HCT116 (cell line): ENCODE measurements at regions of chr11 and their contacts with region 1.

Region 1: GRCh38 chr11:96342961-96343711 is at the start of gene MAML2:
- DNase-seq: peak; percentile 79
- ATAC-seq: peak; percentile 99
- H3K4me3 ChIP-seq: peak within 1 kb of the TSS; percentile 59 to 69
- H3K27ac ChIP-seq: no peak within 1 kb of the TSS
- H3K4me1 ChIP-seq: peaks cover 4 to 20% of the 10 kb centered on the region in 2 experiments; a peak in 3 of 4 replicates
- H3K27me3 ChIP-seq: no peaks in the 10 kb centered on the region
- CTCF ChIP-seq: peak; percentile 62 to 94 (median 82)
- POLR2A ChIP-seq: no peak
- RAD21 ChIP-seq: peak; percentile 88
- total RNA-seq, gene MAML2: 2.6 TPM

Region 2: GRCh38 chr11:95849087-95849825 is 493.9 kb before region 1 on chr11:
- CTCF ChIA-PET with region 1: interaction called, 12 read pairs
- POLR2A ChIA-PET with region 1: interaction called, 3 read pairs
- RAD21 ChIA-PET with region 1: interaction called in 1 of 2 experiments, 4 read pairs
- intact Hi-C with region 1: no loop called
- DNase-seq: peak; percentile 32
- ATAC-seq: peak; percentile 88
- H3K4me3 ChIP-seq: no peak overlapping the region
- H3K27ac ChIP-seq: no peak overlapping the region
- H3K4me1 ChIP-seq: no peaks in the 10 kb centered on the region
- H3K27me3 ChIP-seq: no peaks in the 10 kb centered on the region
- CTCF ChIP-seq: peak; percentile 39 to 60 (median 45); a peak in 5 of 6 replicates
- POLR2A ChIP-seq: no peak
- RAD21 ChIP-seq: peak; percentile 65

Region 3: GRCh38 chr11:96091476-96091875 is 251.7 kb before region 1 on chr11:
- CTCF ChIA-PET with region 1: interaction called, 13 read pairs
- POLR2A ChIA-PET with region 1: interaction called, 3 read pairs
- RAD21 ChIA-PET with region 1: interaction called in 1 of 2 experiments, 3 read pairs
- intact Hi-C with region 1: no loop called
- DNase-seq: no peak
- ATAC-seq: peak; percentile 52; the same call in 1 of the 2 replicates
- H3K4me3 ChIP-seq: no peak overlapping the region
- H3K27ac ChIP-seq: no peak overlapping the region
- H3K4me1 ChIP-seq: peaks cover 9 to 10% of the 10 kb centered on the region in 2 experiments; a peak in 3 of 4 replicates
- H3K27me3 ChIP-seq: no peaks in the 10 kb centered on the region
- CTCF ChIP-seq: peak in 2 of 3 experiments; percentile 12 to 26; a peak in 2 of 6 replicates
- POLR2A ChIP-seq: no peak
- RAD21 ChIP-seq: peak; percentile 53

Region 4: DNA sequence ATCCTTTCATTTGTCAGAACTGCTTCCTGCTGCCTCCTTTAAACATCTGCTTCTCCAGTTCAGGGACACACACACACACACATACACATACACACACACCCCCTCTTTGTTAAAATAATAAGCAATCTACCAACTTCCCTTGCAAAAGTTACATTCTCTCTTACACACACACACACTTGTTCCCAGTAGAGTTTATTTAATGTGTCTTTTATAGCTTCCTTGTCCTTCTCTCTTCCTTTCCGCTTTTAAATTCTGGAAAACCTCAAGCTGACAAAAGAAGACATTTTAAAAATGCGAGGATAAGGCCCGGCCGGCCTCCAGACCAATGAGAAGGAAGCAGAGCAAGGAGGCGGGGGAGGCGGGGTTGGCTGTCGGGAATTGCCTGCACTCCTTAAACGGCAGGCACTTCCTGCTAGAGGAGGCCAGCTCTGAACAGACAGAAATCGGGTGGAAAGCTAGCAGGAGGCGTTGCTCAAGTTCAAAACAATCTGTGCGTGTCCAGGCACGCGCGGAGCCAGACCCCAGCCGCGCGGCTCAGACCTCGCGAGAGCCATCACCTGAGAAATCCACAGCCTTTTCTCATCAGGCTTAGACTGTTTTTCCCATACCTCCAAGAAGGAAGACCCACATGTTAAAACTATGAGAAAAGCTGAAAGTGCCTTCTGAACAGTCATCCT is 100.0 kb before region 1 on chr11:
- CTCF ChIA-PET with region 1: interaction called, 12 read pairs
- POLR2A ChIA-PET with region 1: interaction called, 4 read pairs
- RAD21 ChIA-PET with region 1: interaction called, 3 to 4 read pairs
- intact Hi-C with region 1: loop called (anchors 5 kb)
- DNase-seq: peak; percentile 92
- ATAC-seq: peak; percentile 96
- H3K4me3 ChIP-seq: peak overlapping the region; percentile 42 to 47
- H3K27ac ChIP-seq: peak overlapping the region; percentile 87
- H3K4me1 ChIP-seq: peaks cover 26 to 45% of the 10 kb centered on the region in 2 experiments
- H3K27me3 ChIP-seq: no peaks in the 10 kb centered on the region
- CTCF ChIP-seq: no peak
- POLR2A ChIP-seq: no peak
- RAD21 ChIP-seq: 0 out of 2 replicates have a peak, but pooled peaks have one; percentile 11

Region 5: GRCh38 chr11:96389720-96390487 is 46.8 kb after region 1 on chr11 and contains the starts of genes CCDC82 and JRKL:
- CTCF ChIA-PET with region 1: interaction called, 16 read pairs
- POLR2A ChIA-PET with region 1: interaction called, 4 read pairs
- RAD21 ChIA-PET with region 1: interaction called in 1 of 2 experiments, 4 read pairs
- intact Hi-C with region 1: no loop called
- DNase-seq: peak; percentile 94
- ATAC-seq: peak; percentile 94
- H3K4me3 ChIP-seq: peak within 1 kb of the TSS; percentile 77 to 88
- H3K27ac ChIP-seq: peak within 1 kb of the TSS; percentile 54
- H3K4me1 ChIP-seq: peaks cover 3 to 17% of the 10 kb centered on the region in 2 experiments; a peak in 2 of 4 replicates
- H3K27me3 ChIP-seq: no peaks in the 10 kb centered on the region
- CTCF ChIP-seq: no peak
- POLR2A ChIP-seq: peak; percentile 81
- RAD21 ChIP-seq: no peak
- total RNA-seq, gene CCDC82: 11.2 TPM
- total RNA-seq, gene JRKL: 6.7 TPM

Region 6: GRCh38 chr11:96869207-96869606 is 526.1 kb after region 1 on chr11:
- CTCF ChIA-PET with region 1: no interaction called
- POLR2A ChIA-PET with region 1: no interaction called
- RAD21 ChIA-PET with region 1: no interaction called
- intact Hi-C with region 1: no loop called
- DNase-seq: no peak
- ATAC-seq: no peak
- H3K4me3 ChIP-seq: no peak overlapping the region
- H3K27ac ChIP-seq: no peak overlapping the region
- H3K4me1 ChIP-seq: no peaks in the 10 kb centered on the region
- H3K27me3 ChIP-seq: no peaks in the 10 kb centered on the region
- CTCF ChIP-seq: no peak
- POLR2A ChIP-seq: no peak
- RAD21 ChIP-seq: no peak